ENCODE measurements at regions of chr21 and their contacts with region 1.

Region 1: GRCh38 chr21:33976082-33977016 is 60.7 kb upstream of the ATP5PO start:
- H3K4me3 Mint-ChIP-seq: peak overlapping the region; percentile 64
- H3K27ac Mint-ChIP-seq: peak overlapping the region; percentile 99
- H3K4me1 Mint-ChIP-seq: peaks cover 77% of the 10 kb centered on the region
- H3K27me3 Mint-ChIP-seq: no peaks in the 10 kb centered on the region

Region 2: GRCh38 chr21:33936301-33937038 is 39.9 kb before region 1 on chr21:
- intact Hi-C with region 1: loop called (anchors 5 kb)
- H3K4me3 Mint-ChIP-seq: no peak overlapping the region
- H3K27ac Mint-ChIP-seq: peak overlapping the region; percentile 64
- H3K4me1 Mint-ChIP-seq: peaks cover 70% of the 10 kb centered on the region
- H3K27me3 Mint-ChIP-seq: no peaks in the 10 kb centered on the region

Region 3: GRCh38 chr21:34202553-34203372 is 226.4 kb after region 1 on chr21:
- intact Hi-C with region 1: loop called (anchors 5 kb)
- H3K4me3 Mint-ChIP-seq: peak overlapping the region; percentile 54
- H3K27ac Mint-ChIP-seq: peak overlapping the region; percentile 73
- H3K4me1 Mint-ChIP-seq: peaks cover 89% of the 10 kb centered on the region
- H3K27me3 Mint-ChIP-seq: no peaks in the 10 kb centered on the region